ENCODE measurements at regions of chr22 and their contacts with region 1.

Region 1: DNA sequence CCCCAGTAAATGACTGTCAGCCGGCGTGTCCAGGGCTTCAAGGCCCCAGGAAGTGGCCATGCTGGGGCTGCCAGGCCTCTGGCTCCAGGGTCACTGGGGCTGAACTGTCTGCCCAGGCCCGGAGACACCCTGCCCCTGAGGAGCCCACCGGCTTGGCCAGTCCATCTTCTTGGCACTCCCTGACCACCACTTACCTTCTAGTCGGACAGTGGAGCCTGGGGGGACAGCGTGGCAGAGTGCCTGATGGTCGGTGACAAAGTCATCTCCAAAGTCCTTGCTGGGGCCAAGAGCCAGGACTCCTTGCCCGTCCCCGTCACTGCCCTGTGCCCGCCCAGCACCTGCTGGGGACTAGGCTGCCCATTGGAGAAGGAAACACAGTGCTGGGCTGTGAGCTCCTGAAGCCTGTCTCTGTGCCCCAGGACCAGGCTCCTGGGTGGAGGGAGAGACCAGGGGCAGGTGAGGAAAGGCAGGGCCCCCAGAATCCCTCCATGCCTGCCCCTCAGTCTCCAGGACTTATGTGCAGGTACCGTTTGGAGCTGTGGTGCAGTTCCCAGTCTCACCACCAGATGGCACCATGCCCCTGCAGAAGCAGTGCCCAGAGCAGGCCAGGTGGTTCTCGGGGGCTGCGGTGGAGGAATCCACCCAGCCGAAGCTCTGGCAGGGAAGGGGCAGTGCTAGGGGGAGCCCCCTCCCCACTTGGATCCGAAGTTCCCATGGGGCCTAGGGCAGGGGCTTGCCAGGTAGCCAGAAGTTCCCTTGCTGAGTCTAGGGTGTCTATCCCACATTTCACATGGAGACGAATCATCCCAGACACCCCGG is 6.0 kb upstream of the CCDC188 start:
- DNase-seq: peak; percentile 96 to 100 (median 99)
- ATAC-seq: peak; percentile 89
- H3K4me3 ChIP-seq: no peak overlapping the region
- H3K27ac ChIP-seq: no peak overlapping the region
- H3K4me1 ChIP-seq: peaks cover 0 to 68% of the 10 kb centered on the region in 2 experiments; a peak in 2 of 5 replicates
- H3K27me3 ChIP-seq: peaks cover 33 to 74% of the 10 kb centered on the region in 2 experiments; a peak in 4 of 5 replicates
- CTCF ChIP-seq: peak; percentile 99 to 100 (median 100)
- EP300 ChIP-seq: peak; percentile 25; the same call in 1 of the 2 replicates
- POLR2A ChIP-seq: no peak
- RAD21 ChIP-seq: peak; percentile 100

Region 2: DNA sequence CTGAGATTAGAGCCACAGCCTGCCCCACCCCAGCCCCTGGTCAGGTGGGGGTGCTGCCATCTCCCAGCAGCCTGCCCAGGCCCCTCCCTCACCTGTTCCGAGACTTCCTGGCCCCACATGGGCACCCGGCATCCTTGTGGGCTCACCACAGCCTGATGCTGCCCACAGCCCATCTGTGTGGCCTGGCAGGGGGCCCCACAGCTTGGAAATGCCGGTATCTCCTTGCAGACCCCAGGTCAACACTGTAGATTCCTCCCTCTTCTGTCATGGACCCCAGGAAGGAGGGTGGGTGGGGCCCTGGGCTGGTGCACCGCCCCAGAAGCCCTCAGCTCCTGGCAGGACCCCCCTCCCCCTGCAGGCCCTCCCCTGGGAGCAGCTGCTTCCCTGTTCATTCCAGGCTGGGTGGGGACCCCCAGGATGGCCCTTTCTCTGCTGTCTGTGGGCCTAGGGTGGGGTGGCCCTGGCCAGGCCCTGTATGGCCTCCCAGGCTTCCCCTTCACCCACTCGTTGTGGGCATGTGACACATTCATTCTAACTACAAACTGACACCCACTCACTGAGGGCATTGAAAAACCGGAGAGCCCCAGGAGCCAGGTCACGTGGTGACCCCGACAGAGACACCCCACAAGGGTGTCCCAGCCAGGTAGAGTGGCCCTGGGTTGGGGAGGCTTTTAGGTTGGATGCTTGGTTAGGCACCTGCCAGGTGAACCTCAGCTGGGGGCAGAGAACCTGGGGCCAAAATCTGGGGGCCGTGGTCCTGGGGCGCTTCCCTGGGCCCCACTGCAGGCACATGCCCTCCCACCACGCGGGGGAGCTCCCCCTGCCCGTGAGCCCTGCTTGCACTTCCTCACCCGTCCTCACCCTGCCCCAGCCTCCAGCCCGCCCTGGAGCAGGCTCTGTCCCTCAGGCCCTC is 38.1 kb after region 1 on chr22:
- CTCF ChIA-PET with region 1: interaction called, 3 read pairs
- POLR2A ChIA-PET with region 1: interaction called, 4 read pairs
- in situ Hi-C with region 1: no loop called
- intact Hi-C with region 1: loop called (anchors 5 kb)
- DNase-seq: no peak
- ATAC-seq: peak; percentile 27; the same call in 2 of the 3 replicates
- H3K4me3 ChIP-seq: no peak overlapping the region
- H3K27ac ChIP-seq: no peak overlapping the region
- H3K4me1 ChIP-seq: peaks cover 0 to 49% of the 10 kb centered on the region in 2 experiments; a peak in 2 of 5 replicates
- H3K27me3 ChIP-seq: peaks cover 84 to 95% of the 10 kb centered on the region in 2 experiments
- CTCF ChIP-seq: peak; percentile 29 to 57 (median 39); a peak in 5 of 6 replicates
- EP300 ChIP-seq: no peak
- POLR2A ChIP-seq: no peak
- RAD21 ChIP-seq: peak in 1 of 2 experiments; percentile 29; a peak in 1 of 4 replicates

Region 3: GRCh38 chr22:20268279-20269012 is 111.6 kb after region 1 on chr22 and contains the start of gene RTN4R:
- CTCF ChIA-PET with region 1: interaction called, 62 read pairs
- POLR2A ChIA-PET with region 1: interaction called, 9 read pairs
- in situ Hi-C with region 1: no loop called
- intact Hi-C with region 1: loop called (anchors 1 kb)
- DNase-seq: peak; percentile 93 to 99 (median 96)
- ATAC-seq: peak; percentile 90
- H3K4me3 ChIP-seq: peak within 1 kb of the TSS; percentile 48
- H3K27ac ChIP-seq: no peak within 1 kb of the TSS
- H3K4me1 ChIP-seq: peaks cover 4 to 69% of the 10 kb centered on the region in 2 experiments; a peak in 4 of 5 replicates
- H3K27me3 ChIP-seq: peaks cover 19 to 69% of the 10 kb centered on the region in 2 experiments; a peak in 4 of 5 replicates
- CTCF ChIP-seq: peak; percentile 87 to 99 (median 98)
- EP300 ChIP-seq: peak; percentile 52
- POLR2A ChIP-seq: no peak
- RAD21 ChIP-seq: peak; percentile 98 to 99
- polyA plus RNA-seq, gene RTN4R: 0.04 TPM in 1 of 2 experiments, not detected in the other

Region 4: GRCh38 chr22:20292673-20293232 is 135.9 kb after region 1 on chr22:
- CTCF ChIA-PET with region 1: interaction called, 3 read pairs
- POLR2A ChIA-PET with region 1: interaction called, 7 read pairs
- in situ Hi-C with region 1: loop called (anchors 5 kb)
- intact Hi-C with region 1: no loop called
- DNase-seq: no peak
- ATAC-seq: peak; percentile 10; the same call in 2 of the 3 replicates
- H3K4me3 ChIP-seq: no peak overlapping the region
- H3K27ac ChIP-seq: no peak overlapping the region
- H3K4me1 ChIP-seq: peaks cover 0 to 23% of the 10 kb centered on the region in 2 experiments; a peak in 2 of 5 replicates
- H3K27me3 ChIP-seq: peaks cover 71 to 96% of the 10 kb centered on the region in 2 experiments
- CTCF ChIP-seq: no peak
- EP300 ChIP-seq: no peak
- POLR2A ChIP-seq: no peak
- RAD21 ChIP-seq: no peak

Region 5: GRCh38 chr22:20671409-20672081 is 514.7 kb after region 1 on chr22:
- CTCF ChIA-PET with region 1: no interaction called
- POLR2A ChIA-PET with region 1: no interaction called
- in situ Hi-C with region 1: loop called (anchors 25 kb)
- intact Hi-C with region 1: no loop called
- DNase-seq: no peak
- ATAC-seq: peak; percentile 55; the same call in 2 of the 3 replicates
- H3K4me3 ChIP-seq: no peak overlapping the region
- H3K27ac ChIP-seq: no peak overlapping the region
- H3K4me1 ChIP-seq: peaks cover 0 to 18% of the 10 kb centered on the region in 2 experiments; a peak in 1 of 5 replicates
- H3K27me3 ChIP-seq: peaks cover 23 to 28% of the 10 kb centered on the region in 2 experiments
- CTCF ChIP-seq: no peak
- EP300 ChIP-seq: no peak
- POLR2A ChIP-seq: no peak
- RAD21 ChIP-seq: no peak